ENCODE measurements at regions of chr4 and their contacts with region 1.

Region 1: GRCh38 chr4:7067452-7068278 is at the start of gene GRPEL1:
- DNase-seq: peak; percentile 100
- ATAC-seq: peak; percentile 94
- H3K4me3 Mint-ChIP-seq: peak within 1 kb of the TSS; percentile 94
- H3K27ac Mint-ChIP-seq: peak within 1 kb of the TSS; percentile 94
- H3K4me1 Mint-ChIP-seq: peaks cover 43% of the 10 kb centered on the region
- H3K27me3 Mint-ChIP-seq: peaks cover 2% of the 10 kb centered on the region
- total RNA-seq, gene GRPEL1: 81.0 to 93.0 TPM

Region 2: DNA sequence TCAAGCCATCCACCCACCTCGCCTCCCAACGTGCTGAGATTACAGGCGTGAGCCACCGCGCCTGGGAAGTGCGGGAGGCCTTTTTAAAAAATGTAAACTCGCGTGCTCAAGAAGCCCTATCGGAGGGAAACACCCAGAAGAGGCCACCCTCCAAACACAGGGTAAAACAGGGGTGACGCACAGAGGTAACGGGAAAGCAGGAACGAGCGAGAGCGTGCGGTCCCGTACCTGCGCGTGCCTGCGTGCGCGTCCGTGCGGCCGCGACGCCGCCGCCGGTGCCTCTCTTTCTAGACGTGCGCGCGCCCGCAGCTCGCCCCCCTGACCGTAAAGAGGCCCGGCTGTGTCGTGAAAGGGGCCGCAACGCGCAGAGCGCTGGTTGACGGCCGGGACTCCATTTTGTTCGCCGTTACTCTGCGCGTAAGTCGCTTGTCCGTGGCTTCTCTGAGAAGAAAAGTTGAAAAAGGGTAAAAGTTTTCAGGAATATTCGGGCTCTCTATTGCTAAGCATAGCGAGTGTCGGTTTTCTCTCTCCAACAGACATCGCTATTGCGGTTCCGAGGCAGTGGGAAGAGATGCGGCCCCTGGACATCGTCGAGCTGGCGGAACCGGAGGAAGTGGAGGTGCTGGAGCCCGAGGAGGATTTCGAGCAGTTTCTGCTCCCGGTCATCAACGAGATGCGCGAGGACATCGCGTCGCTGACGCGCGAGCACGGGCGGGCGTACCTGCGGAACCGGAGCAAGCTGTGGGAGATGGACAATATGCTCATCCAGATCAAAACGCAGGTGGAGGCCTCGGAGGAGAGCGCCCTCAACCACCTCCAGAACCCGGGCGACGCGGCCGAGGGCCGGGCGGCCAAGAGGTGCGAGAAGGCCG is 427.1 kb before region 1 on chr4 and contains the start of gene MRFAP1:
- CTCF ChIA-PET with region 1: interaction called, 3 read pairs
- POLR2A ChIA-PET with region 1: no interaction called
- intact Hi-C with region 1: loop called (anchors 1 kb)
- DNase-seq: peak; percentile 97
- ATAC-seq: peak; percentile 86
- H3K4me3 Mint-ChIP-seq: peak within 1 kb of the TSS; percentile 96
- H3K27ac Mint-ChIP-seq: peak within 1 kb of the TSS; percentile 100
- H3K4me1 Mint-ChIP-seq: peaks cover 27% of the 10 kb centered on the region
- H3K27me3 Mint-ChIP-seq: no peaks in the 10 kb centered on the region
- total RNA-seq, gene MRFAP1: 66.8 to 122 TPM

Region 3: DNA sequence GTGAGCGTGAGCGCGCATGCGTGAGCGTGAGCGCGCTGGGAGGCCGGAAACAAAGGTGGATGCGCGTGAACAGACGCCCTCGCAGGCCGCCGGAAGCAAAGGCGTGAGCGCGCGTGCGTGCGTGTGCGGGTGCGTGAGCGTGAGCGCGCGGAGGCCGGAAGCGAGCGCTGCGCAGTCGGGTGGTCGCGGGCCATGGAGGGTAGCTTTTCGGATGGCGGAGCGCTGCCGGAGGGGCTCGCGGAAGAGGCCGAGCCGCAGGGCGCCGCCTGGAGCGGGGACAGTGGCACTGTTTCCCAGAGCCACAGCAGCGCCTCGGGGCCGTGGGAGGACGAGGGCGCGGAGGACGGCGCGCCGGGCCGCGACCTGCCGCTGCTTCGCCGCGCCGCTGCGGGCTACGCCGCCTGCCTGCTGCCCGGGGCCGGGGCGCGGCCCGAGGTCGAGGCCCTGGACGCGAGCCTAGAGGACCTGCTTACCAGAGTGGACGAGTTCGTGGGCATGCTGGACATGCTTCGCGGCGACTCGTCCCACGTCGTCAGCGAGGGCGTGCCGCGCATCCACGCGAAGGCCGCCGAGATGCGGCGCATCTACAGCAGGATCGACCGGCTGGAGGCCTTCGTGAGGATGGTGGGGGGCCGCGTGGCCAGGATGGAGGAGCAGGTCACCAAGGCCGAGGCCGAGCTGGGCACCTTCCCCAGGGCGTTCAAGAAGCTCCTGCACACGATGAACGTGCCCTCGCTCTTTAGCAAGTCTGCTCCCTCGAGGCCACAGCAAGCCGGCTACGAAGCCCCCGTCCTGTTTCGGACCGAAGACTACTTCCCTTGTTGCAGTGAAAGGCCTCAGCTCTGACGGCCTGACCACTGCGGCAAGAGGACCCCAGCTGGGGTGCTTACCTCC is 351.4 kb before region 1 on chr4 and contains the start of gene BLOC1S4:
- CTCF ChIA-PET with region 1: interaction called, 11 read pairs
- POLR2A ChIA-PET with region 1: no interaction called
- intact Hi-C with region 1: loop called (anchors 1 kb)
- DNase-seq: peak; percentile 93
- ATAC-seq: peak; percentile 80
- H3K4me3 Mint-ChIP-seq: peak within 1 kb of the TSS; percentile 92
- H3K27ac Mint-ChIP-seq: peak within 1 kb of the TSS; percentile 92
- H3K4me1 Mint-ChIP-seq: peaks cover 27% of the 10 kb centered on the region
- H3K27me3 Mint-ChIP-seq: no peaks in the 10 kb centered on the region
- total RNA-seq, gene BLOC1S4: 10.1 to 16.7 TPM

Region 4: DNA sequence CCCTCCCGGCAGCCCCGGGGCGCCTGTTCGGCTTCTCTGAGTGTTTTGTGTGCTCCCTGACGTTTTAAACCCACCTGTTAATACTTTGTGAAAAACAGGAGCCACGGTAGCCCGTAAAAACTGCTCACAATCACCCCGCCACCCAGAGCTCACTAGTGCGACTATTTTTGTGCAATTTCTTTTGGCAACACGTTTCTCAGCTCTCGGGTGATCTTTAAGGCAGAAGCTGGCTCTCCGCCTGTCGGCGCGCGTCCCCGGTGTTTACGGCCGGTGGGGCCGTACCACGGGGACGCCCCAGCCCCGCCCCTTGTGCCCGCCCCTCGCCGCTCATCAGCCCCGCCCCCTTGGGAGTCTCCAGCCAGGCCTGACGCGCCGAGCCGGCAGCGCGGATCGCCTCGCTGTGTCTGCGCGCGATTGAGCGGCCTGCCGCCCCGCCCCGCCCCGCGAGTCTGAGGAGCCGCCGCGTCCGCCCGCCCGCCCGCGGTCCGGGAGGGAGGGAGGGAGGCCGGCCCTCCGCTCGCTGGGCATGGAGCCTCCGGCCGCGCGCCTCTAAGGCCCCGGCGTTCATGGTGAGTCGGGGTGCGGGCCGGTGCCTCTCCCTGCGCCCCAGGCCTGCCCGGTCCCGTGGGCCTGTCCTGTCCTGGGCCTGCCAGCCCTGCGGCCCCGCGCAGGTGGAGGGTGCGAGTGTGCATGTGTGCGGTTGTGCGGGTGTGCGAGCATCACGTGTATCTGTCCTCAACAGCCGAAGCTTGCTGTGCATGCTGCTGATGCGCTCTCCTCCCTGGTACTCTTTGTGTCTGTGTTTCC is 80.7 kb before region 1 on chr4:
- CTCF ChIA-PET with region 1: interaction called, 7 read pairs
- POLR2A ChIA-PET with region 1: interaction called, 10 read pairs
- intact Hi-C with region 1: loop called (anchors 1 kb)
- DNase-seq: peak; percentile 97
- ATAC-seq: peak; percentile 93
- H3K4me3 Mint-ChIP-seq: peak overlapping the region; percentile 96
- H3K27ac Mint-ChIP-seq: peak overlapping the region; percentile 93
- H3K4me1 Mint-ChIP-seq: peaks cover 66% of the 10 kb centered on the region
- H3K27me3 Mint-ChIP-seq: no peaks in the 10 kb centered on the region

Region 5: DNA sequence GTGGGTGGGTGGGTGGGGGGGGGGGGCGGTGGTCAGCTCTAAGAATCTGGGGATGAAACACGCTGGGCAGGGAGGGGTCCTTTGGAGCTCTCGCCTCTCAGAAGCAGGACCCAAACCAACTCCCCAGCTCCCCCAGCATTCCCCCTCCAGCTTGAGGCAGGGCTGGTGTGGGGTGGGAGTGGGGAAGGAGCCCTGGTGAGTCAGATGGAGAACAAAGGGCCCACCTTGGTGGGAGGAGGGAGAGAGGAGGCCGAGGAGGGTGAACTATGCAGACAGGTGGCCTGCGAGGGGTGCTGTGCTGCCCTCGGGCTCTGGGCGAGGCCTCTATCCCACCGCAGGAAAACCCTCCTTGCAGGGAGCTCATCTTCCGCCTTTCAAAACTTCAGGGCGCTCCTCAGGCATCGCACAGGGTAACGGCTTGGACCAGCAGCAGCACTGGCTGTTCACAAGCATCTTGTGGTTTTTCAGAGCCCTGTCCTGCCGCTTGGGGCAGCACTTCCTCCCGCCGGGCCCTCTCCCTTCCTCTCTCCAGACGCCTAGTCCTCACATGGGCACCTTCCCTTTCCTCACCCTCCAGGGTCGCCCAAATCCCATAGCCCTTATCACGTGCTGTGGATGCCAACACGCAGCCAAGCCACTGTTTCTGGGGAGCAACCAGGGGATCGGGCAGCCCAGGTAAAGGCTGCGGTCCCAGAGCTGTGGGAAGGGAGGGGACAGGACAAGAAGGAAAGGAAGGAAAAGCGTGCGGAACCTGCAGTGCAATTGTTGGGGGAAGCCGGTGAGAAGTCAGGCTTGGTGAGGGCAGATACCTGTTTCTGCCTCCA is 34.2 kb after region 1 on chr4:
- CTCF ChIA-PET with region 1: interaction called, 9 read pairs
- POLR2A ChIA-PET with region 1: no interaction called
- intact Hi-C with region 1: loop called (anchors 1 kb)
- DNase-seq: peak; percentile 78
- ATAC-seq: peak; percentile 74
- H3K4me3 Mint-ChIP-seq: peak overlapping the region; percentile 84
- H3K27ac Mint-ChIP-seq: no peak overlapping the region
- H3K4me1 Mint-ChIP-seq: peaks cover 8% of the 10 kb centered on the region
- H3K27me3 Mint-ChIP-seq: no peaks in the 10 kb centered on the region

Region 6: GRCh38 chr4:7134737-7135388 is 67.2 kb after region 1 on chr4:
- CTCF ChIA-PET with region 1: no interaction called
- POLR2A ChIA-PET with region 1: no interaction called
- intact Hi-C with region 1: no loop called
- DNase-seq: no peak
- ATAC-seq: peak; percentile 19
- H3K4me3 Mint-ChIP-seq: no peak overlapping the region
- H3K27ac Mint-ChIP-seq: no peak overlapping the region
- H3K4me1 Mint-ChIP-seq: no peaks in the 10 kb centered on the region
- H3K27me3 Mint-ChIP-seq: no peaks in the 10 kb centered on the region